Activated T-helper 1 cell treated with anti-CD3 and anti-CD28 coated beads, Interleukin-12 subunit alpha, Interleukin-12 subunit beta, Interleukin-2, Interleukin-4 antibody, amounts not matched to agents 30 ng/mL and 10 ng/mL and 1 ng/mL, durations not matched to agents 14 hours and 24 hours and 36 hours (primary cell): ENCODE measurements at regions of chr6 and their contacts with region 1.

Region 1: GRCh38 chr6:42745707-42746462 is at the start of gene TBCC:
- DNase-seq: peak; percentile 91
- H3K4me3 Mint-ChIP-seq: peak within 1 kb of the TSS; percentile 100
- H3K27ac Mint-ChIP-seq: peak within 1 kb of the TSS; percentile 100
- H3K4me1 Mint-ChIP-seq: peaks cover 32% of the 10 kb centered on the region
- H3K27me3 Mint-ChIP-seq: no peaks in the 10 kb centered on the region
- total RNA-seq, gene TBCC: 20.1 and 22.3 TPM in 2 replicates

Region 2: DNA sequence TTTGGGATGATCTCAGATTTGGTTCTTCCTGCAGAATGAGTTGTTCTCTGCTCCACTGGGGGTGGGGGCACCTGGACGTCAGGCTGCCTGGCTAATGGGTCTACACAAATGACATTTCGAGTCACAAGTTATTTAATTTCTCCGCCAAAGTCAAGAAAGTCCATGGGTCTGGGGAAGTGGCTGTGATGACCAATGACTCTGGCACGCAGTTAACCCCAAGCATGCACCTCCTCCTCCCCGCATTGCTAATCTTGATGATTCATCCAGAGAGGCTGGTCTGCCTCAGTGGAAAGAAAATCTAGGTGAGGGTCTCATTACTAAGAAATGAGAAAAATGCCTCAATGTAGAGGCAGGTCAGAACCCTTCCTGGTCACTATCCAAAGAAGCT is 429.9 kb before region 1 on chr6:
- intact Hi-C with region 1: no loop called
- DNase-seq: no peak
- H3K4me3 Mint-ChIP-seq: no peak overlapping the region
- H3K27ac Mint-ChIP-seq: peak overlapping the region; percentile 80
- H3K4me1 Mint-ChIP-seq: peaks cover 72% of the 10 kb centered on the region
- H3K27me3 Mint-ChIP-seq: no peaks in the 10 kb centered on the region

Region 3: DNA sequence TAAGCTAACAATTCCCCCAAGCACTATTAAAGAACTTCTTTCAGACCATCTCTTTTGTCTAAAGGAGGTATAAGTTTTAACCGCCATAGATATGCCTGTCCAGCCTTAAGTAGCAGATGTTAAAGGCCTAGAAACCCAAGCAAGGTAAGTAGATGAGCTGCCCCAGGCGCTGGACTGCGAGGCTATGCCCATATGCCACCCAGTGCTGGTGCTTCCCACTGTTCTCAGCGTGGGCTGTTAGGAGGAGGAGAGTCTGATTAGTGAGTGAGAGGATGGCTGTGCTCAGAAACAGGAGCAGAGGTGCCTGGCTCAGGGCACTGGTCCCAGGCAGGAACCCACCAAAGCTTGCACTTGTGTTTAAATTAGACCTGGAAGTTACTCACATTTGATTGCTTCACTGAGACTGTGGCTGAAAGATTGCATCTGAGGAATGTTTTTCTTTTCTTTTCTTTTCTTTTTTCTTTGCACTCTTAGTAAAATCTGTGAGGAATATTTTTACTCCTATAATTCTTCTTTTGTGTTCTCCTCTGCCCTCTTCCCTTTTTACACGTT is 55.7 kb before region 1 on chr6:
- intact Hi-C with region 1: no loop called
- DNase-seq: no peak
- H3K4me3 Mint-ChIP-seq: no peak overlapping the region
- H3K27ac Mint-ChIP-seq: peak overlapping the region; percentile 62
- H3K4me1 Mint-ChIP-seq: peaks cover 35% of the 10 kb centered on the region
- H3K27me3 Mint-ChIP-seq: no peaks in the 10 kb centered on the region

Region 4: DNA sequence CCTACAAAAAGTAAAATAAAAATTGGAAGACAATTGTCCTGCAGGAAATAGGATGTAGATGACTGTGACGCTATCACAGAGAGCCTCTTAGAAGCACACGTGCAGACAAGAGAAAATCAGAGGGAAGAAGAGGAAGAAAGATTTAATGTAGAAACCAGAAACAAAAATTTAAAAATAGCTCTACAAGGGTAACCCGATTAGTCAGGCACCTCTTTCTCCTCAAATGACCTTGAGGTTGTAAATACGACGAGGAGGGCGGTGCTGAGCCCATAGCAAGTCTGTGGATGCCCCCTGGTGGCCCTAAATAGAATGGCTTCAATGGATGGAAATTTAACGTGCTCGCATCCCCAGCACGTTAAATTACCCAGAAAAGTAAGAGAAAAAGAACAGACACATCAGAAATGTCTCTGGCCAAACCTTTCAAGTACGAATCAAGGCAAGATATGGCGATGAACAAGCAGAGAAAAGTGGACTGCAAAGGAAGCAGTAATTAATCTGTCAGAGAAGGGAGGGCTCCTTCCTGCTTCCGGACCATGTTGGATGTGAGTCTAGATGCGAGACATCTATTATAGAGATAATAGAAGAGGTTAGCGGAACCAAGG is 19.3 kb before region 1 on chr6:
- intact Hi-C with region 1: loop called (anchors 1 kb)
- DNase-seq: peak; percentile 59
- H3K4me3 Mint-ChIP-seq: peak overlapping the region; percentile 75
- H3K27ac Mint-ChIP-seq: peak overlapping the region; percentile 98
- H3K4me1 Mint-ChIP-seq: peaks cover 19% of the 10 kb centered on the region
- H3K27me3 Mint-ChIP-seq: peaks cover 5% of the 10 kb centered on the region

Region 5: DNA sequence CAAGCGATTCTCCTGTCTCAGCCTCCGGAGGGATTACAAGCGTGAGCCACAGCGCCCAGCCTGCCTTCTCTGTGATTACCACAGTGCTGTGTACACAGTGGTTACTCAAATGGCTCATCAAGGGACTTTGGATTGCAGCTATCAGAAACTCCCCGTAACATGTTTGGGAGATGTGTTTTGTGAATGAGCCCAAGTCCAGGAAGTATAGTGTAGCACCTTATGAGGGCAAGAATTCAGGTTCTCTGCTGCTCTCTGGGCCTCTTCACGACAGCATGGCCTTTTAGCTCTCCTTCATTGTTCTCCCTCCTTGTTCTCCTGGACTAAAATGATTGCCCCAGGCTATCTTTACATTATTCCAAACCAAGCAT is 99.4 kb after region 1 on chr6:
- intact Hi-C with region 1: loop called (anchors 1 kb)
- DNase-seq: no peak
- H3K4me3 Mint-ChIP-seq: no peak overlapping the region
- H3K27ac Mint-ChIP-seq: no peak overlapping the region
- H3K4me1 Mint-ChIP-seq: peaks cover 4% of the 10 kb centered on the region
- H3K27me3 Mint-ChIP-seq: no peaks in the 10 kb centered on the region

Region 6: DNA sequence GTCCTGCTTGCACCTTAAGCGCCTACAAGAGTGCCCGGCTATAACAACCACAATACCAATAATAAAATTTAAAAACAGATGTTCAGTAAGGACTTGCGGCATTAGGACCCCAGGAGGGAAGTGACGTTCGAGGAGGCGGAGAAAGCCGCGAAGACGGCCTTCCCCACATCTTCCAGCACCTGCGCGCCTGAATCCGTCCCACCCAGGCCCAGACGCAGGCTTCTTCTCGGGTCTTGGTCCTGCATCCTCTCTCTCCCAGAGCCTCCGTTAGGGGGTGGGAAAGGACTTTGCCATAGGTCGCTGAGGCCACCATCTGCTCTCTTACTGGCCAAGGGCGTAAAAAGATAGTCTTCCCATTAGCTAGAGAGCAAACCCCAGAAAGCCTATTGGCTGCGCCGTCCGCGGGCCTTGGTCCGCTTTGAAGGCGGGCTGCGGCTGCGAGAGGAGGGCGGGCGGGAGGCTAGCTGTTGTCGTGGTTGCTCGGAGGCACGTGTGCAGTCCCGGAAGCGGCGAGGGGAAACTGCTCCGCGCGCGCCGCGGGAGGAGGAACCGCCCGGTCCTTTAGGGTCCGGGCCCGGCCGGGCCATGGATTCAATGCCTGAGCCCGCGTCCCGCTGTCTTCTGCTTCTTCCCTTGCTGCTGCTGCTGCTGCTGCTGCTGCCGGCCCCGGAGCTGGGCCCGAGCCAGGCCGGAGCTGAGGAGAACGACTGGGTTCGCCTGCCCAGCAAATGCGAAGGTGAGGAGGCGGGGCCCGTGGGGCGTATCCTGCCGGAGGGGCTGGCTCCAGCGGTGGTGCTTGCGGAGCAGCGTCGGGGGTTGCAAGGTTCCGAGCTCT is 183.3 kb after region 1 on chr6 and contains the start of gene CNPY3:
- intact Hi-C with region 1: loop called (anchors 1 kb)
- DNase-seq: peak; percentile 93
- H3K4me3 Mint-ChIP-seq: peak within 1 kb of the TSS; percentile 99
- H3K27ac Mint-ChIP-seq: peak within 1 kb of the TSS; percentile 98
- H3K4me1 Mint-ChIP-seq: peaks cover 38% of the 10 kb centered on the region
- H3K27me3 Mint-ChIP-seq: no peaks in the 10 kb centered on the region
- total RNA-seq, gene CNPY3: 47.2 and 49.2 TPM in 2 replicates

Region 7: GRCh38 chr6:43059168-43060033 is 313.5 kb after region 1 on chr6 and contains the starts of genes KLC4 and MRPL2:
- intact Hi-C with region 1: loop called (anchors 1 kb)
- DNase-seq: peak; percentile 96
- H3K4me3 Mint-ChIP-seq: peak within 1 kb of the TSS; percentile 96
- H3K27ac Mint-ChIP-seq: peak within 1 kb of the TSS; percentile 98
- H3K4me1 Mint-ChIP-seq: peaks cover 41% of the 10 kb centered on the region
- H3K27me3 Mint-ChIP-seq: no peaks in the 10 kb centered on the region
- total RNA-seq, gene KLC4: 12.7 and 13.7 TPM in 2 replicates
- total RNA-seq, gene MRPL2: 89.6 and 97.4 TPM in 2 replicates